ENCODE measurements at regions of chr15 and their contacts with region 1.

Region 1: DNA sequence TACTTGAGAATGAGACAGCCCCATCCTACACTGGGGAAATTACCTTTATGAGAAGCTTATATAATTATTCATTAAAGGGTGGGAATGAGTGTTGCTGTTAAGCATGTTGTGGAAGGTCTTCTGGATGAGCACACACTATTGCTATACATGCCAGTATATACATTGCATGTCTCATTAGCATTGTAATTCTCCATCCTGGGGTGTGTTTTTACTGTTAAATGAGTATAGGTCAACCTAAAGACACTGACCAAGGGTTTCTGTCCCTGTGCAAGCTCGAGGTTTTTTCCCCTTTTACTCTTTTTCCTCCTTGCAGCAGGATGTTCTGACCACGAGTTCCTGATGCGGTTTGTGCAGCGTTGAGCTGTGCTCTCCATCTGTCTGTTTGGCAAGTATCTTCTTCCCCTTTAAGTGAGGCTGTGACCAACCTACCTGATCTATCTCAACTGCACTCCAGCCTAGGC is 7.2 kb upstream of the IVD start:
- DNase-seq: peak; percentile 39
- H3K4me3 Mint-ChIP-seq: peak overlapping the region; percentile 29
- H3K27ac Mint-ChIP-seq: peak overlapping the region; percentile 32
- H3K4me1 Mint-ChIP-seq: peaks cover 32% of the 10 kb centered on the region
- H3K27me3 Mint-ChIP-seq: no peaks in the 10 kb centered on the region

Region 2: GRCh38 chr15:40382580-40383456 is 15.6 kb before region 1 on chr15 and contains the start of gene KNSTRN:
- CTCF ChIA-PET with region 1: interaction called, 6 read pairs
- POLR2A ChIA-PET with region 1: interaction called, 41 read pairs
- DNase-seq: peak; percentile 94
- H3K4me3 Mint-ChIP-seq: peak within 1 kb of the TSS; percentile 98
- H3K27ac Mint-ChIP-seq: peak within 1 kb of the TSS; percentile 82
- H3K4me1 Mint-ChIP-seq: peaks cover 32% of the 10 kb centered on the region
- H3K27me3 Mint-ChIP-seq: peaks cover 5% of the 10 kb centered on the region
- total RNA-seq, gene KNSTRN: 54.2 to 54.3 TPM

Region 3: DNA sequence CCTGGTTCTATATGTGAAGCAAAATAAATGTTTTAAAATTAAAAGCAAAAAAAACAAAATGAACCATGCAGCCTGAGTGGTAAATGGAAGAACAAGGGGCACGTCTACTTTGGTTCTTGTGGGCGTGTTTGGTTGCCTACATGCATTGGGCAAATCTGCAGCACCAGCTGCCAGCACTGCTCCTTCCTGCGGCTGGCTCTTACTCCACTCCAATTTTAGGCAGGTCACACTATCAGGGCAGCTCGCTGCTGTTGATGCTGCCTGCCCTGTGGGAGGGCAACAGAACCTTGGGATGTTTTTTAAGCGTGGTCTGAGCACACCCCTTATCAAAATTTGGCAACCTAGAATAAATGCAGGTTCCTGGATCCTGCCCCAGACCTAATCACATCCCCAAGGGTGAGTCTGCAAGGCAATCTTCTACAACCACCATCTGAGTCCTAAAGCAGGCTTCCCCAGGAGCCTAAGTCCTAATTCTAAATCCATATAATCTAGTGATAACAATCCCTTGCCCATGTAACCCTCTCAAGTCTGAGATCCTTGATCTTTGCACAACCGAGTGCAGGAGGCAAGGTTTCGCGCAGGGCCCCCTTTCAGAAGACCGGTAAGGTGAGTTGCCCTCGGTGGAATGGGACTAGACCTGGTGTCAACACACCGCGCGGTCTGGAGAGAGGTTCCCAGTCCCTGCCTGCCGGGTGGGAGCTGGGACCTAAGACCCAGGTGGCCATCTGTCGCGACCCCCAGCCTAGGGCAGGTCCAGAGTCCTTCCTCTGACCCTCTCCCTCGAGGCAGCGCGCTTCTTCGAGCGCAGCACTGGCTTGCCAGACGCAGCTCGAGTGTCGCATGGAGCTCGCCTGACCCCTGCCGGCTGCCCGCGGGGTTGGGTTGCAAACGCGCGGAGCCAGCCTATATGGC is 23.1 kb after region 1 on chr15:
- CTCF ChIA-PET with region 1: interaction called, 11 read pairs
- POLR2A ChIA-PET with region 1: interaction called, 3 read pairs
- DNase-seq: peak; percentile 84
- H3K4me3 Mint-ChIP-seq: no peak overlapping the region
- H3K27ac Mint-ChIP-seq: no peak overlapping the region
- H3K4me1 Mint-ChIP-seq: peaks cover 2% of the 10 kb centered on the region
- H3K27me3 Mint-ChIP-seq: peaks cover 1% of the 10 kb centered on the region

Region 4: DNA sequence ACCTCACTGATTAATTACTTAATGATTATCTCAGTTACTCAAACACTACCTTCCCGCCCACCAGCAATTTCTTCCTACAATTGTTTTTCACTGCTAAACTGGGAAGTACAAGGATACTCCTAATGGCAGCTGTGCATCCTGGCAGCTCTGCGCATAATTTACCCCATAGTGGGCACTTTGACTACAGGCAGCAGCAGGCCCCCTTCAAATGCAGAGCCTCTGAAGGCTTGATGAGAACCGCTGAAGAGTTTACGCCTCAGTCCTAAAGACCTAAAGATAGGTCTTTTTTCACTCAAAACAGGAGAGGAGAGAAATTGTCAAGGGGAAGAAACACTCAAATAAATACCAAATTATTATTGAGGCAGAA is 155.7 kb after region 1 on chr15:
- CTCF ChIA-PET with region 1: no interaction called
- POLR2A ChIA-PET with region 1: no interaction called
- DNase-seq: no peak
- H3K4me3 Mint-ChIP-seq: no peak overlapping the region
- H3K27ac Mint-ChIP-seq: no peak overlapping the region
- H3K4me1 Mint-ChIP-seq: peaks cover 2% of the 10 kb centered on the region
- H3K27me3 Mint-ChIP-seq: no peaks in the 10 kb centered on the region